Calu3 (cell line): ENCODE measurements at regions of chr5 and their contacts with region 1.

Region 1: GRCh38 chr5:15003511-15003920 is 131.9 kb upstream of the ANKH start:
- DNase-seq: peak; percentile 53
- H3K4me3 Mint-ChIP-seq: no peak overlapping the region
- H3K27ac Mint-ChIP-seq: no peak overlapping the region
- H3K4me1 Mint-ChIP-seq: peaks cover 21% of the 10 kb centered on the region
- H3K27me3 Mint-ChIP-seq: peaks cover 4% of the 10 kb centered on the region
- CTCF ChIP-seq: peak; percentile 60

Region 2: DNA sequence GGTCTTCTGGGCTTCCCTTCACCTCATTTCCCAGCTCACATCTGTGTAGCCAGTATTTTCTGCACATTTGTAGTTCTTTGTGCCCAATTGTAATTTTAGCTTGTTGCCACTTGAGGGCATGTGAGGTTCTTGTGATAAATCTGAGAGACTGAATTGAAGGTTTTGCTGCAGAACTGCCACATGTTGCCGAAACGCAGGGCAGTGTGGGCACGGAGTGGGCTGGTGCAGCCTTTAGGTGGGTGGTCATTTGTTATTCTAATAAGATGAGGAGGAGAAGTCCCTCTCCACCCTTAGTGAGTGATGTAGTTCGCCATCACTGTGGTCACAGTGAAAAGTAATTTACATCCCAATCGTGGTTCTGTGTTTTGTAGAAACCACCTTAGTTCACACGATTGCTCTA is 317.8 kb before region 1 on chr5:
- CTCF ChIA-PET with region 1: interaction called, 6 read pairs
- intact Hi-C with region 1: loop called (anchors 2 kb)
- DNase-seq: no peak
- H3K4me3 Mint-ChIP-seq: no peak overlapping the region
- H3K27ac Mint-ChIP-seq: no peak overlapping the region
- H3K4me1 Mint-ChIP-seq: no peaks in the 10 kb centered on the region
- H3K27me3 Mint-ChIP-seq: no peaks in the 10 kb centered on the region
- CTCF ChIP-seq: peak; percentile 29

Region 3: GRCh38 chr5:14809369-14810155 is 194.0 kb before region 1 on chr5:
- CTCF ChIA-PET with region 1: no interaction called
- intact Hi-C with region 1: loop called (anchors 5 kb)
- DNase-seq: peak; percentile 63
- H3K4me3 Mint-ChIP-seq: peak overlapping the region; percentile 62
- H3K27ac Mint-ChIP-seq: peak overlapping the region; percentile 87
- H3K4me1 Mint-ChIP-seq: peaks cover 38% of the 10 kb centered on the region
- H3K27me3 Mint-ChIP-seq: no peaks in the 10 kb centered on the region
- CTCF ChIP-seq: no peak

Region 4: DNA sequence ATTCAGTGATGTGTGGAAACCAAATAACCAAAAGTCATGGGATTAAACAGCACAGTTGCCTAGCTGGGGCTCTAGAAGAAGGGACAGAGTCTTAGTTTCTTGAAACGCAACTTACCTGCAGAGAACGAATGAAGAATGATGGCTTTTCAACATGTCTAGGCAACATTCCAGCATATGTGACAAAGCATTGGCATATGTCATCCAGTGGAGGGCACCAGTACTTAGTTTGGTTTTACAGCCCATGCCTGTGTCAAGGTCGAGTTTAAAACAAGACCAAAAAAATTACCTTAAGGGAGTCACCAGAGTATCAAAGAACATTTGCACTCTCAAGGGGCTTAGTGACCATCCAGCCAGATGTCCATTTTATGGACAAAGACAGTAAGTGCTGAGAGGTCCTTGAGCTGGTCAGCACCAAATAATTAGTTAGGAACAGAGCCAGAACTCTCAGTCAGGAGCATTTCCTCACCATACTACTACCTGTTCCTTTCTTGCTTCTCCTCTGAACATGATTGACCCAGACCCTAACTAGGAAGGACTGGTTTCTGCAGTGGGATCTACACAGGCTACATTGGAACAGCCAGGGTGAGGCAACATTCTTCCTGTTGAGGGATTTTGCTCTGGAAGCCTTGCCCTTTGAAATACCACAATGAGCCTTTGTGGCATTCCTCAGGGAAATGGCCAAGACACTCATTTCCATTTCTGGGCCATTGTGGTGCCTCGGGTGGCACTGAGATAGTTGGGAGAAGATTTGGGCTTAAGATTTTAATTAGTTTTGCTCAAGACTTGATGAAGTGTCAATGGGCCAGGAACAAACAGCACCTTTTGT is 56.5 kb before region 1 on chr5:
- CTCF ChIA-PET with region 1: interaction called, 3 read pairs
- intact Hi-C with region 1: loop called (anchors 2 kb)
- DNase-seq: peak; percentile 30
- H3K4me3 Mint-ChIP-seq: no peak overlapping the region
- H3K27ac Mint-ChIP-seq: no peak overlapping the region
- H3K4me1 Mint-ChIP-seq: peaks cover 16% of the 10 kb centered on the region
- H3K27me3 Mint-ChIP-seq: no peaks in the 10 kb centered on the region
- CTCF ChIP-seq: peak; percentile 31

Region 5: DNA sequence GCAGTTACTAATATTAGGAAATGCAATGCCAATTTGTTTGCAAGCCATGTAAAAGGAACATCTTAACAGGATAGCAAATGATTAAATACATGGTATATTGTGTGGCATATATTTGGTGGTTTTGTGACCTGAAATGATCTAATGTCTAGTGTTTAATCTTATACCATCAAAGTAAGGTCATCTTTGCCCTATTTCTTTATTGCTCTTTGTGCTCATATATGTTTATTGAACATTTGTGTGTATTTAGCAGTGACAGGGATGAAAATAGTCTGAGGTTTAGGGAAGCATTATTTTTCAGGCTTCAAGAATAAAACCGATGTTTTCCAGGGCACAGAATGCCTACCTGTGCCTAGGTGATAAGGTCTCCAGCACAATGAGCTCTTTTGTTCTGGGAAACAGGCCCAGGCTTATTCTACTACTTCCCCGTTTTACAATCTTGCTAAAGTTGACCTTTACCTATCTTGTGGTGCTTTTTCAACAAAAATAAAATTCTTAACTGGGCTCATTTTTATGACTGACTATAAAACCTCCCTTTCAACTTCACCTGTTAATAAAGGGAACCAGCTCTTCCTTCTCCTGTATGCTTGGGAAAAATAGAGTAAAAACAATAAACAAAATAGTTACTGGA is 26.3 kb before region 1 on chr5:
- CTCF ChIA-PET with region 1: interaction called, 10 read pairs
- intact Hi-C with region 1: loop called (anchors 2 kb)
- DNase-seq: peak; percentile 25
- H3K4me3 Mint-ChIP-seq: no peak overlapping the region
- H3K27ac Mint-ChIP-seq: peak overlapping the region; percentile 50
- H3K4me1 Mint-ChIP-seq: peaks cover 25% of the 10 kb centered on the region
- H3K27me3 Mint-ChIP-seq: no peaks in the 10 kb centered on the region
- CTCF ChIP-seq: no peak